ENCODE measurements at regions of chr6 and their contacts with region 1.

Region 1: DNA sequence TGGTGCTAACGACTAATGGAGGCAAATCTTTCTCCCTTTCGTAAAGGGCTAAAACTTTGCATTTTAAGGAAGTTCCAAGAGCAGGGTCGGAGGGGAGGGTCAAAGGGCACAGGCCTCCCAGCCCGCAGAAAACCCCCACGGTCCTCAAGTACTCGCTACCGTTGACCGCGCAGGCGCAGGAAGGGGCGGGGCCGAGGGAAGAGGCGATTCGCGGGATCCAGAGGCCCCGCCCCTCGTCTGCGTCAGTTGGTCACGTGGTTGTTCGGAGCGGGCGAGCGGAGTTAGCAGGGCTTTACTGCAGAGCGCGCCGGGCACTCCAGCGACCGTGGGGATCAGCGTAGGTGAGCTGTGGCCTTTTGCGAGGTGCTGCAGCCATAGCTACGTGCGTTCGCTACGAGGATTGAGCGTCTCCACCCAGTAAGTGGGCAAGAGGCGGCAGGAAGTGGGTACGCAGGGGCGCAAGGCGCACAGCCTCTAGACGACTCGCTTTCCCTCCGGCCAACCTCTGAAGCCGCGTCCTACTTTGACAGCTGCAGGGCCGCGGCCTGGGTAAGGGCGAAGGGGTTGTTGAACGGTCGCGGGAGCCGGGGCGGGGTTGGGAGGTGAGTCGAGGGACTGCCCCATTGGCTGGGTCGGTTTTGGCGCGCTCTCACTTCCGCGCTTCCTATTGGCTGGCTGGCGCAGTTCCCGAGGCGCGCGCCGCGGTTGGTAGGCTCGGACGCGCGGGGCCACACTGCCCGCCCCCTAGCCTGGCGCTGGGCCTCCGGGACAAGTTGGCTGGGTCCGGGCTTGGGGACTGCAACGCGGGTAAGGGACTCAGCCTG is at the start of gene GMNN:
- DNase-seq: peak; percentile 99
- ATAC-seq: peak; percentile 93
- H3K4me3 Mint-ChIP-seq: peak within 1 kb of the TSS; percentile 98
- H3K27ac Mint-ChIP-seq: peak within 1 kb of the TSS; percentile 99
- H3K4me1 Mint-ChIP-seq: peaks cover 26% of the 10 kb centered on the region
- H3K27me3 Mint-ChIP-seq: no peaks in the 10 kb centered on the region
- total RNA-seq, gene GMNN: 74.0 to 76.1 TPM

Region 2: DNA sequence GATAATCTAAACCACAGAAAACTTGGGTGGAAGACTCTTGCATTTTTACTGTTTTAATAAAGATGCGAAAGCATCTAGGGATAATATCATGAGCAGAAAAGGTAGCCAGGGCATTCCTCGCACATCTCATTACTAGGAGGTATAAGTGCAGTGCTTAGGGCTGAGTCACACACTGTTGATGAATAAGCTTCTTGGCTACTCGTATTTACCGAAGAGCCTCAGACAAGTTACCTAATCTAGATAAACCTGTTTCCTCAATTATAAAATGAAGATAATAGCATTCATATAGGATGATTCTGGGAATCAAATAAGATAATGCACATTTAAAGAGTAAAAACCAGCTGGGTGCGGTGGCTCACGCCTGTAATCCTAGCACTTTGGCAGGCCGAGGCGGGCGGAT is 128.1 kb before region 1 on chr6:
- CTCF ChIA-PET with region 1: no interaction called
- POLR2A ChIA-PET with region 1: no interaction called
- intact Hi-C with region 1: loop called in 1 of 2 experiments (anchors 5 kb)
- DNase-seq: no peak
- ATAC-seq: peak; percentile 24
- H3K4me3 Mint-ChIP-seq: peak overlapping the region; percentile 78
- H3K27ac Mint-ChIP-seq: peak overlapping the region; percentile 19
- H3K4me1 Mint-ChIP-seq: peaks cover 14% of the 10 kb centered on the region
- H3K27me3 Mint-ChIP-seq: peaks cover 11% of the 10 kb centered on the region

Region 3: DNA sequence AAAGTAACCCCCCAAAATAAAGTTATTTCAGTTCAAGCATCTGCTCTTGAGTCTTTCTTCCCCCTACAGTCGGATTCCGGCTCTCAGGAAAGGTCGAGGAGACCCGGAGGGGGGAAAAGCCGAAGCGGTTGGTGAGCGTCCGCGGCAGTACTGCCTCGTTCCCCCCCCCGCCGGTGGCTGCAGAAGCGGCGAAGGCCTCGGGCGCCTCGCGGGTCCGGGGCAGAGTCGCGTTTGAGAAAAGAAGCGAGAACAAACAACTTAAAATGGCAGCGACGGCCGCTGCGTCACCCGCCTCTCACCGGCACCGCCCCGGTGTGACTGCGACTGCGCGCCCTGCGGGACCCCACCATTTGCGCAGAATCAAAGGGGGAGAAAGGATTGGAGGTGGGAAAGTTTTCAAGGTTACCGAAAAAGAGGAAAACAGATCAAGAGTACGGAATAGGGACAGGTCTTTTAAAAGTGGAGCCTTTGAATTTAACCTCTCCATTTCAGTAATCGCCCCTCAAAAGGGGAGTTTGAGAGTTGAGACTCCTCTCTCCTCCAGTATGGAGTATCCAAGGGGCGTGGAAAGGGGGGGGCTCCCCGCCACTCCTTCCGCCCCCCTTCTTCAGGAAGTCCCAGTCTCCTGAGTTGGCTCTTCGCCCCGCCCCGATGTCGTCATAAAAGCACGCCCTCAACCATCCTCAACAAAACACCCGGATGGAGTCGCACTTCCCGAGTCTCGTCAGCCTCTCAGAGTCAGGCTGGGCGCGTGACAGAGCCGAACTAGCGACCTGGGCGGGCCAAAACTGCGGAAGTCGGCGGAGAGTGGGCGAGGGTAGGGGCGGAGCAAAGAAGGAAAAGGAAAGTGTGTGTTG is 54.1 kb before region 1 on chr6:
- CTCF ChIA-PET with region 1: interaction called, 9 read pairs
- POLR2A ChIA-PET with region 1: interaction called, 12 read pairs
- intact Hi-C with region 1: loop called (anchors 1 kb)
- DNase-seq: peak; percentile 100
- ATAC-seq: peak; percentile 88
- H3K4me3 Mint-ChIP-seq: peak overlapping the region; percentile 99
- H3K27ac Mint-ChIP-seq: peak overlapping the region; percentile 98
- H3K4me1 Mint-ChIP-seq: peaks cover 32% of the 10 kb centered on the region
- H3K27me3 Mint-ChIP-seq: no peaks in the 10 kb centered on the region

Region 4: GRCh38 chr6:24743265-24743943 is 31.5 kb before region 1 on chr6:
- CTCF ChIA-PET with region 1: no interaction called
- POLR2A ChIA-PET with region 1: no interaction called
- intact Hi-C with region 1: loop called in 1 of 2 experiments (anchors 1 kb)
- DNase-seq: peak; percentile 61
- ATAC-seq: peak; percentile 94
- H3K4me3 Mint-ChIP-seq: peak overlapping the region; percentile 17
- H3K27ac Mint-ChIP-seq: peak overlapping the region; percentile 82
- H3K4me1 Mint-ChIP-seq: peaks cover 28% of the 10 kb centered on the region
- H3K27me3 Mint-ChIP-seq: no peaks in the 10 kb centered on the region

Region 5: DNA sequence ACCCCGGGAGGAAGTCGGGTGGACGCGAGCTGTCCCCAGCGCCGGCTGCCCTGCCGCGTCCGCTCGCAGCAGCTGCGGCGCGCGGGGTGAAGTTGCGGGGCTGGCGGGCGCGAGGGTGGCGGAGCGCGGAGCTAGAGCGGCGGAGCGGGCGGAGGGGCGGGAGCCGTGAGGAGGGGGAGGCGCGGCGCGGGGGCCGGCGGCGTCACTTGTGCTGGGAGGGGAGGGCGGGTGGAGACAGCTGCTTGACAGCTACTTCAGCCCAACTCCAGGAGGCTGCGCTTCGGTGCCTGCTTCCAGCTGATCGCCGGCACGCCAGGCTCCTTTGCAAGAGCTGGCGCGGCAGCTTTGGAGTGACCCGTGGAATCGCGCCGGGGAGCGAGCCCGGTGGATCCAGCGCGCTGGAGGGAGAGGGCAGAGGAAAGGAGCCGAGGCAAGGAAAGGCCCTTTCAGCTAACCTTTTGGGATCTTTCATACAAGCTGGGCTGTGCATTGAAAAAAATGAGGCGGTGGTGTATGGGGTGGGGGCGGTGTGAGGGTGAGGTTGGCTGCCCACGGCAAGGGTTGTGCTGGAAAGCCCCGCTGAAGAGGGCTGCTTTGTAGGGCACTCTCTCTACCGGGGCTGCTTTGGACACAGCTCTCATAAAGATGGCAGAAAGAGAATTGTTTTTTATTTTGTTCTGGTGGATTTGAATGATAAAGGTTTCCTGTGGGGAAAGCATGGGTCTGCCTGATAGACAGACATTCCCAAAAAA is 136.2 kb after region 1 on chr6:
- CTCF ChIA-PET with region 1: no interaction called
- POLR2A ChIA-PET with region 1: no interaction called
- intact Hi-C with region 1: loop called in 1 of 2 experiments (anchors 5 kb)
- DNase-seq: peak; percentile 80
- ATAC-seq: peak; percentile 8
- H3K4me3 Mint-ChIP-seq: peak overlapping the region; percentile 85
- H3K27ac Mint-ChIP-seq: peak overlapping the region; percentile 90
- H3K4me1 Mint-ChIP-seq: peaks cover 83% of the 10 kb centered on the region
- H3K27me3 Mint-ChIP-seq: no peaks in the 10 kb centered on the region

Region 6: DNA sequence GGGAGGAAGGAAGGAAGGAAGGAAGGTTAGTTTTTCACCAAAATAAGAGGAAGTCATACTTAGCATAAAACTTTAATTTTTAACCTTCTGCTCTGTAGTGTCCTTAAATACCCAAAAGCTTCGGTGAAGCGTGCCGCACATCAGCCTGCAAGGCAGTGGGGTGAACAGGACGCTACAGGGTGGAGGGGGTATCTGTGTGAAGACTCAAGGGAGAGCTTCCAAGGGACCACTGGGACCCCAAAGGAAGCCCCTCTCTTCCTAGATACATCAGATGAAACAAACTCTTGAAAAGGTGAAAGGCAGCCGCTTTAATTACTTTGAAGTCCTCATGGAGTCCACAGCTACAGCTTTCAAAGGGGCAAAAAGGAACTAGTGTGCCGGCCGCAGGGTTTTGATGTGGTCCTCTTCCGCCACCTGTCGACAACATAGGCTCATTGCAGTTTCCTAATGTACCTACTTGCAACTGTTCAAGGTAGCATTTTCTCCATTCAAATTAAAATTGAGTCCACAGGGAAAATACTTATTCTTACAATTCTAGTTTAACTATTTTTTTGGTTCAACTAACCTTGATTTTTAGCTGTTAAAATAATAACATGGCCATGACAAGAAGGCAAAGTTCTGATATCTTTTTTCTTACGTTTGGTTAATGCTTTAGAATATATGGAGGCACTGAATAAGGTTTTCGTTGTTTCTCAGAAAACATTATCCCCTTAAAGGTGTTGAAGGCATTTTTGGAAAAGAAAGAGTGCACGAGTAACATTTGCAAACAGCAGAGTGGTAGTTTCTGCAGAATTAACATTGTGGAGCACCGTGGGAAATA is 295.8 kb after region 1 on chr6:
- CTCF ChIA-PET with region 1: interaction called, 5 read pairs
- POLR2A ChIA-PET with region 1: no interaction called
- intact Hi-C with region 1: loop called (anchors 2 to 10 kb)
- DNase-seq: peak; percentile 88
- ATAC-seq: peak; percentile 94
- H3K4me3 Mint-ChIP-seq: no peak overlapping the region
- H3K27ac Mint-ChIP-seq: peak overlapping the region; percentile 47
- H3K4me1 Mint-ChIP-seq: peaks cover 4% of the 10 kb centered on the region
- H3K27me3 Mint-ChIP-seq: no peaks in the 10 kb centered on the region